CD8-positive, alpha-beta T cell (primary cell): ENCODE measurements at regions of chr1 and their contacts with region 1.

Region 1: GRCh38 chr1:207362962-207363858 is 41.7 kb downstream of the CD55 start:
- DNase-seq: peak in 4 of 9 experiments; percentile 25 to 73 (median 36)
- ATAC-seq: peak; percentile 93
- H3K4me3 ChIP-seq: no peak overlapping the region
- H3K4me3 Mint-ChIP-seq: no peak overlapping the region
- H3K27ac ChIP-seq: peak overlapping the region in 1 of 2 experiments; percentile 22
- H3K27ac Mint-ChIP-seq: no peak overlapping the region
- H3K4me1 ChIP-seq: peaks cover 34% of the 10 kb centered on the region
- H3K4me1 Mint-ChIP-seq: peaks cover 8% of the 10 kb centered on the region
- H3K27me3 ChIP-seq: no peaks in the 10 kb centered on the region
- H3K27me3 Mint-ChIP-seq: no peaks in the 10 kb centered on the region
- CTCF ChIP-seq: no peak

Region 2: GRCh38 chr1:206955476-206956451 is 407.4 kb before region 1 on chr1:
- CTCF ChIA-PET with region 1: no interaction called
- POLR2A ChIA-PET with region 1: no interaction called
- intact Hi-C with region 1: no loop called
- DNase-seq: no peak
- ATAC-seq: no peak
- H3K4me3 ChIP-seq: no peak overlapping the region
- H3K4me3 Mint-ChIP-seq: no peak overlapping the region
- H3K27ac ChIP-seq: no peak overlapping the region
- H3K27ac Mint-ChIP-seq: no peak overlapping the region
- H3K4me1 ChIP-seq: no peaks in the 10 kb centered on the region
- H3K4me1 Mint-ChIP-seq: no peaks in the 10 kb centered on the region
- H3K27me3 ChIP-seq: no peaks in the 10 kb centered on the region
- H3K27me3 Mint-ChIP-seq: no peaks in the 10 kb centered on the region
- CTCF ChIP-seq: no peak

Region 3: DNA sequence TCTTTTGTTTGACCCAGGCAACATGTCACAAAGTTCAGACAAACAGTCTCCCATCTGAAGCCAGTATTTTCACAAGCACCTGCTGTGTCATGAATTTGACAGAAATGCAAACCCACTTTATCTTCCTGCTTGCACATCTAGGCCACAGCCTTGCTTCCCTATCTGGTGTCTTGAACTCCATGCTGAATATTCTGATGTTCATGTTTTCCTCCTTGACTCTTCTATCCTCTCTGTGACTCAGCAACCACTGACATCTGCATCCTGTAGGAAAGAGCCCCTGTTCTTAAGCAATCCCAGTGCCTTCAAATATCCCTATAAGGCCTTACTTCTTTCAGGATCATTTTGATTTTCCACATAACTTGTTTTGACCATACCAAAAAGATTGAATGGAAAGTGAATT is 35.2 kb before region 1 on chr1:
- CTCF ChIA-PET with region 1: interaction called, 3 read pairs
- POLR2A ChIA-PET with region 1: no interaction called
- intact Hi-C with region 1: loop called in 1 of 2 experiments (anchors 5 kb)
- DNase-seq: no peak
- ATAC-seq: peak; percentile 11
- H3K4me3 ChIP-seq: no peak overlapping the region
- H3K4me3 Mint-ChIP-seq: no peak overlapping the region
- H3K27ac ChIP-seq: no peak overlapping the region
- H3K27ac Mint-ChIP-seq: no peak overlapping the region
- H3K4me1 ChIP-seq: peaks cover 48% of the 10 kb centered on the region
- H3K4me1 Mint-ChIP-seq: peaks cover 69% of the 10 kb centered on the region
- H3K27me3 ChIP-seq: no peaks in the 10 kb centered on the region
- H3K27me3 Mint-ChIP-seq: no peaks in the 10 kb centered on the region
- CTCF ChIP-seq: no peak